K562 (cell line): ENCODE measurements at regions of chr4 and their contacts with region 1.

Region 1: GRCh38 chr4:94406668-94407437 is 44.9 kb upstream of the PDLIM5 start:
- DNase-seq: peak; percentile 39 to 88 (median 48)
- ATAC-seq: peak; percentile 86
- H3K4me3 ChIP-seq: peak overlapping the region; percentile 14; the same call in 1 of the 2 replicates
- H3K27ac ChIP-seq: peak overlapping the region; percentile 35; the same call in 2 of the 3 replicates
- H3K4me1 ChIP-seq: peaks cover 4 to 18% of the 10 kb centered on the region in 2 experiments; a peak in 2 of 5 replicates
- H3K27me3 ChIP-seq: no peaks in the 10 kb centered on the region
- CTCF ChIP-seq: peak; percentile 72 to 94 (median 84)
- EP300 ChIP-seq: peak; percentile 68; the same call in 1 of the 2 replicates
- POLR2A ChIP-seq: no peak
- RAD21 ChIP-seq: peak; percentile 81 to 82

Region 2: GRCh38 chr4:94332983-94333590 is 73.8 kb before region 1 on chr4:
- CTCF ChIA-PET with region 1: no interaction called
- POLR2A ChIA-PET with region 1: no interaction called
- in situ Hi-C with region 1: no loop called
- intact Hi-C with region 1: loop called (anchors 5 kb)
- DNase-seq: peak in 2 of 4 experiments; percentile 24 to 46
- ATAC-seq: peak; percentile 85
- H3K4me3 ChIP-seq: no peak overlapping the region
- H3K27ac ChIP-seq: no peak overlapping the region
- H3K4me1 ChIP-seq: peaks cover 0 to 3% of the 10 kb centered on the region in 2 experiments; a peak in 2 of 5 replicates
- H3K27me3 ChIP-seq: no peaks in the 10 kb centered on the region; a peak in 1 of 5 replicates
- CTCF ChIP-seq: peak; percentile 57 to 64 (median 61)
- EP300 ChIP-seq: no peak
- POLR2A ChIP-seq: no peak
- RAD21 ChIP-seq: peak; percentile 70 to 80

Region 3: GRCh38 chr4:94451695-94452475 is 45.0 kb after region 1 on chr4 and contains the start of gene PDLIM5:
- CTCF ChIA-PET with region 1: no interaction called
- POLR2A ChIA-PET with region 1: no interaction called
- in situ Hi-C with region 1: no loop called
- intact Hi-C with region 1: loop called (anchors 1 kb)
- DNase-seq: peak; percentile 94 to 96 (median 94)
- ATAC-seq: peak; percentile 86
- H3K4me3 ChIP-seq: peak within 1 kb of the TSS; percentile 84
- H3K27ac ChIP-seq: peak within 1 kb of the TSS; percentile 68
- H3K4me1 ChIP-seq: peaks cover 4 to 16% of the 10 kb centered on the region in 2 experiments
- H3K27me3 ChIP-seq: no peaks in the 10 kb centered on the region
- CTCF ChIP-seq: no peak
- EP300 ChIP-seq: peak; percentile 31
- POLR2A ChIP-seq: peak; percentile 97
- RAD21 ChIP-seq: no peak
- polyA plus RNA-seq, gene PDLIM5: 42.2 to 55.8 TPM

Region 4: GRCh38 chr4:94534401-94535312 is 127.8 kb after region 1 on chr4:
- CTCF ChIA-PET with region 1: no interaction called
- POLR2A ChIA-PET with region 1: no interaction called
- in situ Hi-C with region 1: no loop called
- intact Hi-C with region 1: loop called (anchors 1 kb)
- DNase-seq: peak; percentile 53 to 80 (median 58)
- ATAC-seq: peak; percentile 76
- H3K4me3 ChIP-seq: peak overlapping the region; percentile 8; the same call in 1 of the 2 replicates
- H3K27ac ChIP-seq: peak overlapping the region; percentile 95
- H3K4me1 ChIP-seq: peaks cover 13 to 48% of the 10 kb centered on the region in 2 experiments
- H3K27me3 ChIP-seq: no peaks in the 10 kb centered on the region
- CTCF ChIP-seq: no peak
- EP300 ChIP-seq: peak; percentile 79
- POLR2A ChIP-seq: no peak
- RAD21 ChIP-seq: 0 out of 4 replicates have a peak, but pooled peaks of 1 of the 2 experiments have one; percentile 2

Region 5: GRCh38 chr4:94571298-94571697 is 164.4 kb after region 1 on chr4:
- CTCF ChIA-PET with region 1: no interaction called
- POLR2A ChIA-PET with region 1: interaction called, 3 read pairs
- in situ Hi-C with region 1: no loop called
- intact Hi-C with region 1: loop called (anchors 1 kb)
- DNase-seq: peak in 1 of 4 experiments; percentile 21
- ATAC-seq: peak; percentile 77
- H3K4me3 ChIP-seq: no peak overlapping the region
- H3K27ac ChIP-seq: no peak overlapping the region
- H3K4me1 ChIP-seq: no peaks in the 10 kb centered on the region
- H3K27me3 ChIP-seq: no peaks in the 10 kb centered on the region
- CTCF ChIP-seq: peak in 1 of 3 experiments; percentile 20; a peak in 1 of 6 replicates
- EP300 ChIP-seq: no peak
- POLR2A ChIP-seq: no peak
- RAD21 ChIP-seq: peak in 1 of 2 experiments; percentile 47; a peak in 2 of 4 replicates

Region 6: DNA sequence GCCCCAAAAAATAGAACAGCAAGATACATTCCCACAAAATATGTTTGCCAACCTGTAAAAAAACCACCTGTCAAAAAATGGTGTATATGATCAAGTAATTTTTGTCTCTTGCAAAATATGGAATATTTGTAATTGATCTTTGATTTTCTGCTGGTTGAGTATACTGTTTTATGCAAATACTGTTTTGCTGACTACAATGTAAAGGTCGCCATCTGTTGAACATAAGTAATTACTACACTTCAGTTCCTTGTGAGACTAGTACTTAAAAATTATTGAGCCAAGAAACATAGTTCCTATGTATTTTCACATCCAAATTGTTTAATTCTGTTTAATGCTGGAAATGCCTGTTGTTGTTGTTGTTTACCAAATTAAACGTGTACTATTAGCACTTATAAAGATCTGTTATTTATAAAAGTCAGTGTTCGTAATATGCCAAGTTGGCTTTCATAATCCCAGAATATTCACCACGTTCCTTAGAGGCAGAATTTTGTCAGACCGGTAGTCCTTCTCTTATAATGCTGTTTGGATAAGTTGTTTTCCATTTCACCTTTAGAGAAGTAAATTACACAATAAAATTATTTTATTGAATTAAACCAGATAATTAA is 189.1 kb after region 1 on chr4:
- CTCF ChIA-PET with region 1: interaction called, 14 read pairs
- POLR2A ChIA-PET with region 1: no interaction called
- in situ Hi-C with region 1: loop called (anchors 5 kb)
- intact Hi-C with region 1: loop called (anchors 1 kb)
- DNase-seq: peak; percentile 14 to 59 (median 23)
- ATAC-seq: peak; percentile 79
- H3K4me3 ChIP-seq: no peak overlapping the region
- H3K27ac ChIP-seq: no peak overlapping the region
- H3K4me1 ChIP-seq: no peaks in the 10 kb centered on the region; a peak in 1 of 5 replicates
- H3K27me3 ChIP-seq: no peaks in the 10 kb centered on the region
- CTCF ChIP-seq: peak; percentile 30 to 77 (median 49); a peak in 3 of 6 replicates
- EP300 ChIP-seq: no peak
- POLR2A ChIP-seq: no peak
- RAD21 ChIP-seq: peak; percentile 90 to 92